ENCODE measurements at regions of chr7 and their contacts with region 1.

Region 1: DNA sequence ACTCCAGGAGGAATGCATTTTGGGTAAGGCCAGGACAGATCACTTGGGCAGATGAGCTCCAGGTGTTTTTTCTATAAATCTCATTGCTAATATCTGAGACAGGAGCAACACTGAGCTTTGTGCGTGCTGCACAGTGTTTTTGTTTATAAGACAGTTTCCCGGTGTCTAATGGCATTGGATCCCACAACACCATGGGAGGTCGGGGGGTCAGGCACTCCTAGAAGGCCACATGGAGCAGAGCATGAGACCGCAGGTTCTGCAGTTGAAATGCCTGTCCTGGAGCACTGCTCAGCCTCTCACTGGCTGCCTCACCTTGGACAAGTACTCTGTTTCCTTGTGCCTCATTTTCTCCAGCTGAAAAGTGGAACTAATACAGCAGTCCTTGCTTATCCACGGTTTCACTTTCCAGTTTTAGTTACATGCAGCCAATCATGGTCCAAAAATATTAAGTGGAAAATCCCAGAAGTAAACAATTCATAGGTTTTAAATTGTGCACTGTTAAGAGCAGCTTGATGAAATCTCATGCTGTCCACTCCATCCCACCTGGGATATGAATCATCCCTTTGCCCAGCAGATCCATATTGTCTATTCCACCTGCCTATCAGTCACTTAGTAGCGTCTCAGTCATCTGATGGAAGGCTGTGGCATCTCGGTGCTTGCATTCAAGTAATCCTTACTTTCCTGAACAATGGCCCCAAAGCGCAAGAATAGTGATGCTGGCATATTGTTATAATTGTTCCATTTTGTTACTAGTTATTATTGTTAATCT is 35.2 kb downstream of the ATXN7L1 start:
- DNase-seq: no peak
- H3K4me3 ChIP-seq: no peak overlapping the region
- H3K27ac ChIP-seq: peak overlapping the region; percentile 46 to 69
- H3K4me1 ChIP-seq: no peaks in the 10 kb centered on the region
- H3K27me3 ChIP-seq: no peaks in the 10 kb centered on the region
- CTCF ChIP-seq: no peak
- POLR2A ChIP-seq: no peak

Region 2: DNA sequence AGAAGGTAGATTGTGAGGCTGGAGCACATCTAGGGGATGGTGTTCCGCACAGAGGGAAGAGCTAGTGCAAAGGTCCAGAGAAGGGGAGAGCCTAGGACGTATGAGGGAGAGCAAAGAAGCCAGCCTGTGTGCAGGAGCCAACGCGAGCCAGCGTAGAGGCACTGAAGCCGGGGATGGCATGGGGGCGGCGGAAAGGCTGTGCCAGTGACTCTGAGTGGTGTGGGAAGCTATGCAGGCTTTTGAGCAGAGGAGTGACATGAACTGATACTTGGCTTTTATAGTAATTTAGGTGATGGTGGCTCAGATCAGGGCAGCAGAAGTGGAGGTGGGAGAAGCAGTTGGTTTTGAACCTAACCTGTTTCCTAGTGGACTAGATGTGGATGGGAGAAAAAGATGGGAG is 30.6 kb before region 1 on chr7:
- intact Hi-C with region 1: loop called (anchors 1 kb)
- DNase-seq: no peak
- H3K4me3 ChIP-seq: no peak overlapping the region
- H3K27ac ChIP-seq: no peak overlapping the region
- H3K4me1 ChIP-seq: no peaks in the 10 kb centered on the region
- H3K27me3 ChIP-seq: no peaks in the 10 kb centered on the region
- CTCF ChIP-seq: no peak
- POLR2A ChIP-seq: no peak

Region 3: DNA sequence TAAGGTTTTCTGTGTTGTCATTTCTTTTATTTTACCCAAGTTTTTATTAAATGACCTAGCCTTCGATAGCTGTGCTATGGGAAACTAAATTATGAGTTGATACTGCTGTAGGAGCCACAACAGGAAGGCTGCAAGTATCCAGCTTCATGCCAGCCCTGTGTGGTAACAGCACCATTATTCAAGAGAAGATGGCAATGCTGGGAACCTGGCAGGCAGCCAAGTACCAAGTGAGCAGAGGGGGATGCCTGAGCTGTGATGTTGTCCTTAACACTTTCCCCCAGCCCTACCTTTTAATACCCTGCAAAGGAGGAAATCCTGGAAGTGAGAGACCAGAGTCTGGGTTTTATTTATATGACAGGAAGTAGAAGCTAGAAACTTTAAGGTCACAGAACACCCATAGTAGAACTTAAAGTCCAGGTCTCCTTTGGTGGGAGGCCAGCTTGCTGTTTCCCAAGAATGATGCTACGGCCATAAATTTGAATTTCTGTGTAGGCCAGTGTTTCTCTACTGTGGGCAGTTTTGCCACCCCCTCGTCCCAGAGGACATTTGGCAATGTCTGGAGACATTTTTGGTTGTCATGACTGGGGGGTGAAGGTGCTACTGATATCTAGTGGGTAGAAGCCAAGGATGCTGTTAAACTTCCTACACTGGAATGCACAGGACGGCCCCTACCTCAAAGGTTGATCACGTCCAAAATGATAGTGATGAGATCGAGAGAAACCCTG is 44.4 kb after region 1 on chr7:
- intact Hi-C with region 1: no loop called
- DNase-seq: no peak
- H3K4me3 ChIP-seq: no peak overlapping the region
- H3K27ac ChIP-seq: no peak overlapping the region
- H3K4me1 ChIP-seq: no peaks in the 10 kb centered on the region
- H3K27me3 ChIP-seq: no peaks in the 10 kb centered on the region
- CTCF ChIP-seq: no peak
- POLR2A ChIP-seq: no peak